CD4-positive, alpha-beta T cell (primary cell): ENCODE measurements at regions of chr9 and their contacts with region 1.

Region 1: DNA sequence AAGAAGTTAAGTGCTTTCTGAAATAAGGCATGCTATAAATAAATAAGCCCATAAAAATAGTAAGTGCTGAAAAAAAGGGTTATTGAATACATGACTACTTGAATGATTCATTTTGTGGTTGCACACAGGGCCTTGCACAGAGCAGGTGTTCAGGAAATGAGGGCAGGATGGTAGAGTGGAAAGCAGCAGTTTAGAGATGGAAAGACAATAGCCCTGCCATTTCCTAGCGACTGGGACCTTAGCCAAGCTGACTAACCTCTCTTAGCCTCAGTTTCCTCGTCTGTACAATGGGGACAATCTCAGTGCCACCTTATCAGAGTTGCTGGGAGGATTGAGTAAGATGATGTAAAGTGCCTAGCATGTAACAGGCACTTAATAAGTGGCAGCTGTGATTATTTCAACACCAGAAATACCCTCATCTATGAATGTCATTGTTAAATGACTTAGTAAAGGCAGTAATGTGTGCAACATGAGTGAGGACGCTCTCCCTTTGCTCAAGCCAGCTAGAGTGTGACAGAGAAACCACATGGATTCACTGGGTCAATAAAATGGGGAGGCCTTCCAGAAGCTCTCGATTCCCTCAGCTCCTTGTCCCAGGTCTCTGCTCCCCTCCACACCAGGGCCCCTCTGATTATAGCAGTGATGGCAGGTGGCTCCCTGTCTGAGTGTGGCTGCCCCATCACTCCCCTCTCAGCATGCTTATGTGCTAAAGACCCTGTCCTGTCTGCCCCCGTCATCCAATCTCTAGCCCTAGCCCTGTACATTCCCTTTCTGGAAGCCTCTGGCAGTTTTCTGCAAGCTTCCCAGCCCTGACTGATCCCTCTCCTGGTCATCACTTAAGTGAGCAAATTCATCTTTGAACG is 16.0 kb upstream of the PHF19 start:
- DNase-seq: peak in 13 of 14 experiments; percentile 50 to 89 (median 59)
- ATAC-seq: peak; percentile 55
- H3K4me3 ChIP-seq: no peak overlapping the region
- H3K4me3 Mint-ChIP-seq: peak overlapping the region; percentile 28
- H3K27ac ChIP-seq: peak overlapping the region; percentile 86 to 88
- H3K27ac Mint-ChIP-seq: peak overlapping the region; percentile 98
- H3K4me1 ChIP-seq: peaks cover 96% of the 10 kb centered on the region
- H3K4me1 Mint-ChIP-seq: peaks cover 77% of the 10 kb centered on the region
- H3K27me3 ChIP-seq: no peaks in the 10 kb centered on the region
- H3K27me3 Mint-ChIP-seq: no peaks in the 10 kb centered on the region
- CTCF ChIP-seq: no peak

Region 2: GRCh38 chr9:120792898-120793765 is 99.8 kb before region 1 on chr9 and contains the start of gene FBXW2:
- CTCF ChIA-PET with region 1: no interaction called
- POLR2A ChIA-PET with region 1: interaction called, 21 read pairs
- intact Hi-C with region 1: no loop called
- DNase-seq: peak; percentile 58 to 92 (median 78)
- ATAC-seq: peak; percentile 79
- H3K4me3 ChIP-seq: peak within 1 kb of the TSS; percentile 97
- H3K4me3 Mint-ChIP-seq: peak within 1 kb of the TSS; percentile 88
- H3K27ac ChIP-seq: peak within 1 kb of the TSS; percentile 81 to 82
- H3K27ac Mint-ChIP-seq: peak within 1 kb of the TSS; percentile 92
- H3K4me1 ChIP-seq: peaks cover 39% of the 10 kb centered on the region
- H3K4me1 Mint-ChIP-seq: peaks cover 63% of the 10 kb centered on the region
- H3K27me3 ChIP-seq: no peaks in the 10 kb centered on the region
- H3K27me3 Mint-ChIP-seq: no peaks in the 10 kb centered on the region
- CTCF ChIP-seq: no peak
- total RNA-seq, gene FBXW2: 58.7 to 64.7 TPM

Region 3: GRCh38 chr9:120904061-120904977 is 11.3 kb after region 1 on chr9:
- CTCF ChIA-PET with region 1: interaction called, 4 read pairs
- POLR2A ChIA-PET with region 1: interaction called, 570 read pairs
- intact Hi-C with region 1: loop called in 1 of 2 experiments (anchors 1 kb)
- DNase-seq: peak; percentile 54 to 94 (median 70)
- ATAC-seq: peak; percentile 91
- H3K4me3 ChIP-seq: no peak overlapping the region
- H3K4me3 Mint-ChIP-seq: peak overlapping the region; percentile 35
- H3K27ac ChIP-seq: peak overlapping the region; percentile 92 to 93
- H3K27ac Mint-ChIP-seq: peak overlapping the region; percentile 99
- H3K4me1 ChIP-seq: peaks cover 80% of the 10 kb centered on the region
- H3K4me1 Mint-ChIP-seq: peaks cover 88% of the 10 kb centered on the region
- H3K27me3 ChIP-seq: no peaks in the 10 kb centered on the region
- H3K27me3 Mint-ChIP-seq: no peaks in the 10 kb centered on the region
- CTCF ChIP-seq: no peak

Region 4: GRCh38 chr9:120916588-120916987 is 23.6 kb after region 1 on chr9:
- CTCF ChIA-PET with region 1: interaction called, 3 read pairs
- POLR2A ChIA-PET with region 1: interaction called, 1,343 read pairs
- intact Hi-C with region 1: no loop called
- DNase-seq: no peak
- ATAC-seq: no peak
- H3K4me3 ChIP-seq: no peak overlapping the region
- H3K4me3 Mint-ChIP-seq: no peak overlapping the region
- H3K27ac ChIP-seq: peak overlapping the region; percentile 43
- H3K27ac Mint-ChIP-seq: peak overlapping the region; percentile 90
- H3K4me1 ChIP-seq: peaks cover 96% of the 10 kb centered on the region
- H3K4me1 Mint-ChIP-seq: peaks cover 88% of the 10 kb centered on the region
- H3K27me3 ChIP-seq: no peaks in the 10 kb centered on the region
- H3K27me3 Mint-ChIP-seq: no peaks in the 10 kb centered on the region
- CTCF ChIP-seq: no peak

Region 5: GRCh38 chr9:120928483-120929228 is 35.7 kb after region 1 on chr9:
- CTCF ChIA-PET with region 1: interaction called, 4 read pairs
- POLR2A ChIA-PET with region 1: interaction called, 1,343 read pairs
- intact Hi-C with region 1: loop called (anchors 1 to 5 kb)
- DNase-seq: peak; percentile 58 to 90 (median 78)
- ATAC-seq: peak; percentile 39
- H3K4me3 ChIP-seq: peak overlapping the region; percentile 90
- H3K4me3 Mint-ChIP-seq: peak overlapping the region; percentile 88
- H3K27ac ChIP-seq: peak overlapping the region; percentile 98 to 100
- H3K27ac Mint-ChIP-seq: peak overlapping the region; percentile 100
- H3K4me1 ChIP-seq: peaks cover 90% of the 10 kb centered on the region
- H3K4me1 Mint-ChIP-seq: peaks cover 91% of the 10 kb centered on the region
- H3K27me3 ChIP-seq: no peaks in the 10 kb centered on the region
- H3K27me3 Mint-ChIP-seq: no peaks in the 10 kb centered on the region
- CTCF ChIP-seq: no peak

Region 6: GRCh38 chr9:120936011-120936763 is 43.2 kb after region 1 on chr9:
- CTCF ChIA-PET with region 1: interaction called, 10 read pairs
- POLR2A ChIA-PET with region 1: interaction called, 1,343 read pairs
- intact Hi-C with region 1: loop called in 1 of 2 experiments (anchors 1 kb)
- DNase-seq: peak; percentile 79 to 95 (median 88)
- ATAC-seq: peak; percentile 64
- H3K4me3 ChIP-seq: no peak overlapping the region
- H3K4me3 Mint-ChIP-seq: peak overlapping the region; percentile 46
- H3K27ac ChIP-seq: peak overlapping the region; percentile 45 to 100
- H3K27ac Mint-ChIP-seq: peak overlapping the region; percentile 100
- H3K4me1 ChIP-seq: peaks cover 56% of the 10 kb centered on the region
- H3K4me1 Mint-ChIP-seq: peaks cover 57% of the 10 kb centered on the region
- H3K27me3 ChIP-seq: no peaks in the 10 kb centered on the region
- H3K27me3 Mint-ChIP-seq: no peaks in the 10 kb centered on the region
- CTCF ChIP-seq: peak; percentile 94